Ascending aorta (tissue), 2 donors: ENCODE measurements at regions of chr4 and their contacts with region 1.

Region 1: DNA sequence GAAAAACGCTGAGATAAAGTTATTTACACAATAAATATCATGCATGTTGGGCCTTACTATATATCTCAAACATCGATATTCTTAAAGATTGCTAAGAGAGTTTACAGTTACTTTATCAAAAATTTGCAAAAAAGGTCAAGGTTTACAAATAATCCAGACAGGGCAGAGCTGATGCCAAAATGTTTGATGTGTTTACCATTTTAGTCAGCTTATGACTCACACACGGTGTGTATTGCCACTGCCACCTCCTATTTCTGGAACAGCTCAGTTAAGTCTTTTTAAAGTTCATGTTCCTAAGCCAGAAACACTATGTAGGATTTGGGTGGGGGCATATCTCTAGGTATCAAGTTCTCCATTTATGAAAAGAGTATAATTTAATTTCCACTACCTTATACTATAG is 580.6 kb downstream of the INPP4B start:
- DNase-seq: peak in 1 of 2 donors; percentile 66
- H3K4me3 ChIP-seq: peak overlapping the region in 1 of 2 donors; percentile 8
- H3K27ac ChIP-seq: peak overlapping the region; percentile 67 to 79
- H3K4me1 ChIP-seq: peaks cover 0 to 16% of the 10 kb centered on the region in 2 donors
- H3K27me3 ChIP-seq: no peaks in the 10 kb centered on the region
- CTCF ChIP-seq: no peak

Region 2: GRCh38 chr4:142065086-142065647 is 200.4 kb before region 1 on chr4:
- intact Hi-C with region 1: no loop called
- DNase-seq: no peak
- H3K4me3 ChIP-seq: no peak overlapping the region
- H3K27ac ChIP-seq: no peak overlapping the region
- H3K4me1 ChIP-seq: no peaks in the 10 kb centered on the region
- H3K27me3 ChIP-seq: no peaks in the 10 kb centered on the region
- CTCF ChIP-seq: no peak

Region 3: GRCh38 chr4:142307857-142308256 is 42.3 kb after region 1 on chr4:
- intact Hi-C with region 1: loop called (anchors 2 kb)
- DNase-seq: no peak
- H3K4me3 ChIP-seq: no peak overlapping the region
- H3K27ac ChIP-seq: peak overlapping the region in 1 of 2 donors; percentile 23
- H3K4me1 ChIP-seq: peaks cover 0 to 5% of the 10 kb centered on the region in 2 donors
- H3K27me3 ChIP-seq: no peaks in the 10 kb centered on the region
- CTCF ChIP-seq: no peak

Region 4: DNA sequence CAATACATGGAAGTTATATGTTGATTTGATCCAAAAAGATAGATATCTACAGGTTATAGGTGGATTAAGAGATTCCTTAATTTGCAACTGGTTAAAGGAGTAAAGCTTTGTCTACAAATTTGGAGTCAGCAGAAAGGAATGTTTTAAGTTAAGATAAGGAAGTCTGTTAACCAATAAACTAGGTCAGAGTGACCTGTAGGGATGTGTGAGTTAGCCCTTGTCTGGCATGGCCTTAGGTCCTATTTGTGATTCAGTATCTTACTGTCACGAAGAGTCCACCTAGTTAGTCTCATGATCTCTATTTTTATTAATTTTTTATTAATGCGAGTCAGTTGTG is 349.8 kb after region 1 on chr4:
- intact Hi-C with region 1: no loop called
- DNase-seq: no peak
- H3K4me3 ChIP-seq: no peak overlapping the region
- H3K27ac ChIP-seq: no peak overlapping the region
- H3K4me1 ChIP-seq: no peaks in the 10 kb centered on the region
- H3K27me3 ChIP-seq: no peaks in the 10 kb centered on the region
- CTCF ChIP-seq: no peak